ENCODE measurements at regions of chr3 and their contacts with region 1.

Region 1: GRCh38 chr3:18872466-18872865 is 275.8 kb upstream of the KCNH8 start:
- DNase-seq: no peak
- ATAC-seq: peak; percentile 43
- H3K4me3 Mint-ChIP-seq: no peak overlapping the region
- H3K27ac Mint-ChIP-seq: peak overlapping the region; percentile 20
- H3K4me1 Mint-ChIP-seq: peaks cover 67% of the 10 kb centered on the region
- H3K27me3 Mint-ChIP-seq: peaks cover 2% of the 10 kb centered on the region

Region 2: GRCh38 chr3:18237251-18238005 is 635.0 kb before region 1 on chr3:
- CTCF ChIA-PET with region 1: no interaction called
- POLR2A ChIA-PET with region 1: no interaction called
- intact Hi-C with region 1: loop called in 1 of 2 experiments (anchors 5 kb)
- DNase-seq: peak; percentile 21
- ATAC-seq: peak; percentile 90
- H3K4me3 Mint-ChIP-seq: no peak overlapping the region
- H3K27ac Mint-ChIP-seq: no peak overlapping the region
- H3K4me1 Mint-ChIP-seq: peaks cover 10% of the 10 kb centered on the region
- H3K27me3 Mint-ChIP-seq: peaks cover 19% of the 10 kb centered on the region

Region 3: GRCh38 chr3:18444595-18445400 is 427.7 kb before region 1 on chr3:
- CTCF ChIA-PET with region 1: no interaction called
- POLR2A ChIA-PET with region 1: interaction called, 4 read pairs
- intact Hi-C with region 1: loop called in 1 of 2 experiments (anchors 1 kb)
- DNase-seq: peak; percentile 89
- ATAC-seq: peak; percentile 66
- H3K4me3 Mint-ChIP-seq: peak overlapping the region; percentile 96
- H3K27ac Mint-ChIP-seq: peak overlapping the region; percentile 91
- H3K4me1 Mint-ChIP-seq: peaks cover 25% of the 10 kb centered on the region
- H3K27me3 Mint-ChIP-seq: no peaks in the 10 kb centered on the region

Region 4: DNA sequence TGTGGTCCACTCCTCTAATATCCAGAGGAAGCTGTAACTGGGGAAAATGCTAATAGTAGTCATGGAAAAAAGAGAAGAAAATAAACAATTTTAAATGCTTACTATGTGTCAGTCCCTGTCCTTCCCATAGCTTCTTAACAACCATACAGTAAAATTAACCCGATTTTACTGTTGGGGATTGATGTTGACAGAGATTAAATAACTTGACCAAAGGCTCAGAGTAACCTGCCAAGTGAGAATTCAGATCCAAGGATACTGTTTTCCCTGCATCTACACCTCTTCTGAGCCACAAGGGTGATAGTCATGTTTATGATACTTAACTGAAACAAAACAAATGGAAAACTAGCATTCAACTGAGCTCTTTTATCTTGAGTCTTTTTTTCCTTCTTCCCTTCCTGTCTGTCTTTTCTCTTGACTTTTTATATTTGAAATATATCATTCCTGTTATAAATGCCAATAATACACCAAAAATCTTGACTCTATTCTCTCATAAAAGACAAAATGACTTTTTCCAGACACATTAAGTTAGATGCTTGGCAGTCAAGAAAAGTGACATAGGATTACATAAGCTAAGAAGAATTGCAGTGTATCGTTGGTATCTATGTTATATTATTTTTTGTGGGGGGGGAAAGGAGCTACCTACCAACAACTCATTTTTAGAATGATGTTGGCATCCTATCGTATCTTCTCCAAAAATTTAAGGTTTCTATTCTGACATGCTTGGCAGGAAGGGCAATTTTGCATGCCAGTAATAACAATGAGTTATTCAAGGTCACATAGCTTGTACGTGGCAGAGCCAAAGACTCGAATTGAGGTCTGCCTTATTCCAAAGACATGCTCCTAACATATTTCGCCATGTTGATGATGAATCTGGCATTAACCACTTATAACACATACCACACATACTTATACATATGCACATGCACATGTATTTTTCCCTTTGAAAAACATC is 30.8 kb before region 1 on chr3:
- CTCF ChIA-PET with region 1: interaction called, 25 read pairs
- POLR2A ChIA-PET with region 1: no interaction called
- intact Hi-C with region 1: no loop called
- DNase-seq: no peak
- ATAC-seq: no peak
- H3K4me3 Mint-ChIP-seq: no peak overlapping the region
- H3K27ac Mint-ChIP-seq: no peak overlapping the region
- H3K4me1 Mint-ChIP-seq: peaks cover 45% of the 10 kb centered on the region
- H3K27me3 Mint-ChIP-seq: no peaks in the 10 kb centered on the region

Region 5: DNA sequence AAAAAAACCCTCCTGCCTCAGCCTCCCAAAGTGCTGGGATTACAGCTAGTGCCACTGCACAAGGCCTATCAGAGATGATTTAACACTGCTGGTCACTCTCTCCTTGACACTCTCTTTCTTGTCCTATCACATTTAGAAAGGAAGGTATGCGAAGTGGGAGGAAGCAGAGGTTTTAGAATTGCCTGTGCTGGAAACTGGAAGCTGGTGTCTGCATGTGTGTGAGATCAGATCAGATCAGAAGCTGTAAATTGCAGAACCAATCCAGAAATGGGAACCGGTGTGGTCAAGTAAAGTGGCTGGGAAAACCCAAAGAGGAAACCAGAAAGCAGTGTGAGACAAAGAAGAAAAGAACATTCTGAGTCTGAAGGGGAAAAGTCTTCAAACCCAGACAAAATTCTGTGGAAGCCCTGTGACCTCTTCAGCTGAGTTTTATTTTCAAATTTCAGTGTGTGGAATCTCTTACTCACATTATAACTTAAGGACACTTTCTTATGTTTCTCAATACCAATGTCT is 1058.8 kb after region 1 on chr3:
- CTCF ChIA-PET with region 1: no interaction called
- POLR2A ChIA-PET with region 1: no interaction called
- intact Hi-C with region 1: loop called in 1 of 2 experiments (anchors 5 kb)
- DNase-seq: peak; percentile 71
- ATAC-seq: peak; percentile 82
- H3K4me3 Mint-ChIP-seq: peak overlapping the region; percentile 21
- H3K27ac Mint-ChIP-seq: peak overlapping the region; percentile 83
- H3K4me1 Mint-ChIP-seq: peaks cover 32% of the 10 kb centered on the region
- H3K27me3 Mint-ChIP-seq: peaks cover 12% of the 10 kb centered on the region

Measured in activated CD4-positive, alpha-beta T cell treated with anti-CD3 and anti-CD28 coated beads for 36 hours (primary cell).